ENCODE measurements at regions of chr3 and their contacts with region 1.

Region 1: GRCh38 chr3:49445381-49445780 is 16.3 kb upstream of the NICN1 start:
- DNase-seq: no peak
- H3K4me3 Mint-ChIP-seq: no peak overlapping the region
- H3K27ac Mint-ChIP-seq: no peak overlapping the region
- H3K4me1 Mint-ChIP-seq: peaks cover 9% of the 10 kb centered on the region
- H3K27me3 Mint-ChIP-seq: no peaks in the 10 kb centered on the region

Region 2: DNA sequence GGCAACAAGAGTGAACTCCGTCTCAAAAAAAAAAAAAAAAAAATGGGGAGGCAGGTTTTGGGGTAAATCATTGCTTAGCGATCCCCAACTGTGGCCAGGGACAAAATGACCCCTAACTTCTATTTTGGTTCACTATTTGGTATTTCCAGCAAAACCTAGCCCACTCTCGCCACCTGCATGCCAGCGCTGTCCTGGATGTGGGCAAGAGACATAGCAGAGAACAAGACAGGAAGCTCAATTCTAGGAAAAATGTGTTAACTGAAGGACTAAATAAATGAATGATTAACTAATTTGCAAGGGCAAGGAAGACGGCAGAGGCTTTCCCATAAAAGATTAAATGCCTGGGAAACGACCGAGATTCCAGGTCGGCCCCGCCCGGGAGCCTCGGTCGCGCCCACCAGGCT is 16.7 kb before region 1 on chr3:
- intact Hi-C with region 1: loop called (anchors 2 kb)
- DNase-seq: no peak
- H3K4me3 Mint-ChIP-seq: peak overlapping the region; percentile 94
- H3K27ac Mint-ChIP-seq: peak overlapping the region; percentile 93
- H3K4me1 Mint-ChIP-seq: peaks cover 14% of the 10 kb centered on the region
- H3K27me3 Mint-ChIP-seq: no peaks in the 10 kb centered on the region